ENCODE measurements at regions of chr6 and their contacts with region 1.

Region 1: DNA sequence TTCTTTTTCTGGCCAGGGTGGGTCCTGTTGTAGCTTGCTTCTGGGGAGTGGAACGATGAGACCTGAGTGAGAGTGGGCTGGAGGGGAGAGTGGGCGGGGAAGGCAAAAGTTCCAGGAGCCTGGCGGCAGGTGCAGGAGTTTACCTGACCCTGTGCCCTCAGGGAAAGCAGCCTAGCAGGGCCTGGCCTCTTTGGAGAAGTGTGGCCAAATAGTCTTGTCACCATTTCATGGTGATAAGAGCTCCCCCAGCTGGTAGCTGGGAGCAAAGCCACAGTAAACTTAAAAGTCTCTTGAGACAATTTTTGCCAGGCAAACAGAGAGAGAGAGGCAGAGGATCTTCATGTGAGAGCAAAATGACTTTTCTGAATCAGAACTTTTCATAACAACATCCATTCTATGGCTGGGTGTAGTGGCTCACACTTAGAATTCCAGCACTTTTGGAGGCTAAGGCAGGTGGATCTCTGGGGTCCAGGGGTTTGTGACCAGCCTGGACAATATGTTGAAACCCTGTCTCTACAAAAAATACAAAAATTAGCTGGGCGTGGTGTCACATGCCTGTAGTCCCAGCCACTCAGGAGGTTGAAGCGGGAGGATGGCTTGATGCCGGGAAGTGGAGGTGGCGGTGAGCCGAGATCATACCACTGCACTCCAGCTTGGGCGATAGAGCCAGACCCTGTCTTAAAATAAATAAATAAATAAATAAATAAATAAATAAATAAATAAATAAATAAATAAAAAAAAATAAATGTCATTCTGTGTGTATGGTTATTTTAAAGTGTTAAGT is 161.8 kb upstream of the SCGN start:
- DNase-seq: peak; percentile 80
- ATAC-seq: peak; percentile 82
- H3K4me3 ChIP-seq: no peak overlapping the region
- H3K4me3 Mint-ChIP-seq: no peak overlapping the region
- H3K27ac ChIP-seq: no peak overlapping the region
- H3K27ac Mint-ChIP-seq: no peak overlapping the region
- H3K4me1 ChIP-seq: peaks cover 0 to 3% of the 10 kb centered on the region in 2 donors
- H3K4me1 Mint-ChIP-seq: peaks cover 4% of the 10 kb centered on the region
- H3K27me3 ChIP-seq: no peaks in the 10 kb centered on the region
- H3K27me3 Mint-ChIP-seq: no peaks in the 10 kb centered on the region
- CTCF ChIP-seq: peak; percentile 94

Region 2: DNA sequence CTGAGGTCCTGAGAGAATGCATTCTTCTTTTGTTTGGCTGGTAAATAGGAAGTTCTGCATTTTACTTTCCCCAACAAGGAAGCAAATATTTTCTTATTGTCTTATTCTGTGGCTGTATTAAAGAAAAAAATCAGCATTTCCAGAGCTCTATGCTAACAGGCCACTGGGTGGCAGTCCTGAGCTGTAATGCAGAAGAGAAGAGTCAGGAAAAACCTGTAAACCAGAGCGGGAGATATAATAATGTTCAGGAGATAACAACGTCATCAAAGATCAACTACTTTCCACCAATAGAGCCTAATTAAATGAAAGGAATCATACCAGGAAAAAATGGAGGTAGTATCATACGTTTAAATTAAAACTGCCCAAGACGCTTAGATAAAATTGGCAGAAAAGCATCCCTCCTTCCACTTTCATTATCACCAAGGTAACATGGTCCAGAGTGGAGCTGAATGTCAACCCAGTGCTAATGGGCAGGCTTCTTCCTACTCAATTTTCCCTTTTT is 266.7 kb before region 1 on chr6:
- CTCF ChIA-PET with region 1: interaction called, 42 read pairs
- POLR2A ChIA-PET with region 1: no interaction called
- intact Hi-C with region 1: loop called (anchors 1 kb)
- DNase-seq: peak; percentile 74
- ATAC-seq: peak; percentile 49
- H3K4me3 ChIP-seq: peak overlapping the region in 3 of 5 experiments; percentile 1 to 50 (median 24)
- H3K4me3 Mint-ChIP-seq: peak overlapping the region; percentile 42
- H3K27ac ChIP-seq: no peak overlapping the region
- H3K27ac Mint-ChIP-seq: no peak overlapping the region
- H3K4me1 ChIP-seq: peaks cover 0 to 3% of the 10 kb centered on the region in 2 donors
- H3K4me1 Mint-ChIP-seq: peaks cover 7% of the 10 kb centered on the region
- H3K27me3 ChIP-seq: peaks cover 0 to 3% (median 0%) of the 10 kb centered on the region in 4 experiments
- H3K27me3 Mint-ChIP-seq: peaks cover 13% of the 10 kb centered on the region
- CTCF ChIP-seq: peak; percentile 98

Region 3: GRCh38 chr6:25270559-25270958 is 219.7 kb before region 1 on chr6:
- CTCF ChIA-PET with region 1: interaction called, 353 read pairs
- POLR2A ChIA-PET with region 1: interaction called, 4 read pairs
- intact Hi-C with region 1: loop called (anchors 1 kb)
- DNase-seq: no peak
- ATAC-seq: no peak
- H3K4me3 ChIP-seq: no peak overlapping the region
- H3K4me3 Mint-ChIP-seq: no peak overlapping the region
- H3K27ac ChIP-seq: no peak overlapping the region
- H3K27ac Mint-ChIP-seq: no peak overlapping the region
- H3K4me1 ChIP-seq: no peaks in the 10 kb centered on the region
- H3K4me1 Mint-ChIP-seq: peaks cover under 1% of the 10 kb centered on the region
- H3K27me3 ChIP-seq: peaks cover 0 to 7% (median 0%) of the 10 kb centered on the region in 4 experiments
- H3K27me3 Mint-ChIP-seq: peaks cover 28% of the 10 kb centered on the region
- CTCF ChIP-seq: no peak

Region 4: DNA sequence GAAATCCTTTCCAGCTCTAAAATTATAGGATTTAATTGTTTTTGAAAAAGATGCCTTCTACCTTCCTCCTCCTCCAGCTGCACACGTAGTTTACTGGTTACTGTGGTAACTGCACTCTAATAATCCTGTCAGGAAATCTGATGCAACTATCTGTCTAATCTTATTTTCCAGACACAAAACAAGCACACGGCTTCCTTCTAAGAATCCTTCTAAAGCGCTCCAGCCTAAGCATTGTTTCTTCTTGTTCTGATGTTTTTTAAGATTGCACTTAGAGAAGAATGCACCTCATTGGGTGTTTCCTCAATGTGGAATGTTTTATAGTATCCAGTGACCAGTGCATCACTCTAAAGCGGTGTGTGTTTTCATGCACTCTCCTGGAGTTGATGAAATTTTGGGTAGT is 147.4 kb before region 1 on chr6:
- CTCF ChIA-PET with region 1: interaction called, 22 read pairs
- POLR2A ChIA-PET with region 1: no interaction called
- intact Hi-C with region 1: no loop called
- DNase-seq: no peak
- ATAC-seq: no peak
- H3K4me3 ChIP-seq: no peak overlapping the region
- H3K4me3 Mint-ChIP-seq: no peak overlapping the region
- H3K27ac ChIP-seq: no peak overlapping the region
- H3K27ac Mint-ChIP-seq: no peak overlapping the region
- H3K4me1 ChIP-seq: no peaks in the 10 kb centered on the region
- H3K4me1 Mint-ChIP-seq: peaks cover 13% of the 10 kb centered on the region
- H3K27me3 ChIP-seq: no peaks in the 10 kb centered on the region
- H3K27me3 Mint-ChIP-seq: peaks cover 4% of the 10 kb centered on the region
- CTCF ChIP-seq: no peak

Region 5: DNA sequence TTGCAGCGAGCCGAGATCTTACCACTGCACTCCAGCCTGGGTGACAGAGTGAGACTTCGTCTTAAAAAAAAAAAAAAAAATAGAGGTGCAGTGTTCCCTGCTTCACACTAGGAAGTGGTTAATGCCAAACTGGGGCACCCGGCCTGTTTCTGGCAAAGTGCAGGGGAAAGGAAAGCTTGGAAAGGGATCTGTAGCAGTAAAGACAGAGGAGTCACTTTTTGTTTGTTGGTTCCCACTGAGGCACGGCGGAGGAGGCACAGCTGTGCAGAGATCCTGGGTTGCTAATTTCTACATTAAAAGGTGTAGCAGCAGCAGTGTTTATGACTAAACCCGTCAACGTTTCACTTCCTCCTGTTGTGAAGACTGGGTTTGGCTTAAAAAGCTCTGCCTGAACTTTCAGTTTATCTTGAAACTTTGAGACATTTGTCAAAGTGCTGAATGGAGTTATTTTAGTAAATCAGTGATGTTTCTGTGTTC is 85.5 kb before region 1 on chr6:
- CTCF ChIA-PET with region 1: interaction called, 14 read pairs
- POLR2A ChIA-PET with region 1: no interaction called
- intact Hi-C with region 1: no loop called
- DNase-seq: peak; percentile 75
- ATAC-seq: peak; percentile 93
- H3K4me3 ChIP-seq: peak overlapping the region; percentile 32 to 70 (median 49)
- H3K4me3 Mint-ChIP-seq: no peak overlapping the region
- H3K27ac ChIP-seq: peak overlapping the region; percentile 70 to 71
- H3K27ac Mint-ChIP-seq: no peak overlapping the region
- H3K4me1 ChIP-seq: peaks cover 44 to 48% of the 10 kb centered on the region in 2 donors
- H3K4me1 Mint-ChIP-seq: peaks cover 18% of the 10 kb centered on the region
- H3K27me3 ChIP-seq: no peaks in the 10 kb centered on the region
- H3K27me3 Mint-ChIP-seq: no peaks in the 10 kb centered on the region
- CTCF ChIP-seq: no peak

Region 6: GRCh38 chr6:25465941-25466340 is 24.3 kb before region 1 on chr6:
- CTCF ChIA-PET with region 1: no interaction called
- POLR2A ChIA-PET with region 1: no interaction called
- intact Hi-C with region 1: no loop called
- DNase-seq: no peak
- ATAC-seq: no peak
- H3K4me3 ChIP-seq: no peak overlapping the region
- H3K4me3 Mint-ChIP-seq: no peak overlapping the region
- H3K27ac ChIP-seq: no peak overlapping the region
- H3K27ac Mint-ChIP-seq: no peak overlapping the region
- H3K4me1 ChIP-seq: no peaks in the 10 kb centered on the region
- H3K4me1 Mint-ChIP-seq: peaks cover 7% of the 10 kb centered on the region
- H3K27me3 ChIP-seq: no peaks in the 10 kb centered on the region
- H3K27me3 Mint-ChIP-seq: peaks cover 3% of the 10 kb centered on the region
- CTCF ChIP-seq: no peak

Region 7: DNA sequence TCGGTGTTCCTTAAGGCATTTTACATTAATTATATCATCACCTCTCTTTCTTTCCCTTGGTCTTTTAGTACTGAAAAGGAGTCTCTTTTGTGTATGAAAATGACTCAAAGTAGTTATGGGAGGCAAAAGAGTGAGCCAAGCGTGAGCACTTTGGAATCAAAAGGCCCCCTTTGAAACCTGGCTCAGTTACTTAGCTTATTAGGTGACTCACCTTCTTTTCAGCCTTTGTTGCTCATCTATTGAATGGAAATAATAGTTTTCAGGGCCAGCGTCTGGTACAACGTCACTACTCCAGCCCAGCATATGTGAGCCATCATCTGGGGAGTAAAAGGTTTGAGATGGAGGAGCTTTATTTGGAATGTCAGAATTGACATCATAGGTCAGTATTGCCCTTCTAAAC is 14.5 kb after region 1 on chr6:
- CTCF ChIA-PET with region 1: interaction called, 12 read pairs
- POLR2A ChIA-PET with region 1: no interaction called
- intact Hi-C with region 1: no loop called
- DNase-seq: no peak
- ATAC-seq: no peak
- H3K4me3 ChIP-seq: no peak overlapping the region
- H3K4me3 Mint-ChIP-seq: no peak overlapping the region
- H3K27ac ChIP-seq: no peak overlapping the region
- H3K27ac Mint-ChIP-seq: no peak overlapping the region
- H3K4me1 ChIP-seq: no peaks in the 10 kb centered on the region
- H3K4me1 Mint-ChIP-seq: no peaks in the 10 kb centered on the region
- H3K27me3 ChIP-seq: no peaks in the 10 kb centered on the region
- H3K27me3 Mint-ChIP-seq: no peaks in the 10 kb centered on the region
- CTCF ChIP-seq: no peak

Region 8: DNA sequence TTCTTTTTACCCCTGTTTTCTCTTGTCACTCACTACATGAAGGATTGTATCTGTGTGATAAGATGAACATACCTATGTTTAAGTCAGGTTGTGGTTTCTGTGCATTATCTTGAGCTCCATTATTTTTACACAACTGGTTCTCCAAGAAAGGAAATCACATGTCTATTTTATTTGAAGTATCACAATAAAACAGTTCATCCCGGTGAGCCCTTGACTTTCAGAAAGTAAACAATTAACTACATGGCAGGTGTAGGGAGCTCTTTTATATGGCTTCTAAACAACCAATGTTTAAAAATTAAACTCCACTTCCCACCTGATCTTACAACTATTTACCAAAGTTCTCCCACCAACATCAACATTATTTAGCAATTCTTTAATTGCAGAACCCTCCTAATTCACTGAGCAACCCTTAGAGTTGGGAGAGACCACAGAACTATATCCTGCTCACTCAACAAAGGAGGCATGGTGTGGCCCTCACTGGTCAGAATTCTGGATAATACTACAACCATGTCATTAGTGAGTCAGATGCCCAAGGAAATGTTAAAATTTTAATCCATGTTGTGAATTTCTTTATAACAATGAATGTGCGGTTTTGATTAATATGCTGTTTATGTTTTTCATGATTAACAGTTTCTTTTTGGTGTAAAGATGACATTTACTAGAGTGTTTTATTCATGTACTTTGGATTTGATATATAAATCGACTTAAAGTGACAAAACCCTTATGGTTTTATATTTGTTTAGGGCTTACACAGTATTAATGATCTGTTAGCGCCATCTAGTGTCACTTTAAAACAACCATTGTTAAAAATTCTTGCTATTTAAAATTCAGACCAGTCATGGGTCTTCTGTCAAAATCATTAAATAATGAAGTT is 111.8 kb after region 1 on chr6:
- CTCF ChIA-PET with region 1: no interaction called
- POLR2A ChIA-PET with region 1: no interaction called
- intact Hi-C with region 1: loop called (anchors 2 kb)
- DNase-seq: peak; percentile 62
- ATAC-seq: no peak
- H3K4me3 ChIP-seq: no peak overlapping the region
- H3K4me3 Mint-ChIP-seq: no peak overlapping the region
- H3K27ac ChIP-seq: no peak overlapping the region
- H3K27ac Mint-ChIP-seq: no peak overlapping the region
- H3K4me1 ChIP-seq: no peaks in the 10 kb centered on the region
- H3K4me1 Mint-ChIP-seq: no peaks in the 10 kb centered on the region
- H3K27me3 ChIP-seq: no peaks in the 10 kb centered on the region
- H3K27me3 Mint-ChIP-seq: peaks cover 8% of the 10 kb centered on the region
- CTCF ChIP-seq: peak; percentile 89

Measured in B cell (primary cell).